ENCODE measurements at regions of chr11 and their contacts with region 1.

Region 1: DNA sequence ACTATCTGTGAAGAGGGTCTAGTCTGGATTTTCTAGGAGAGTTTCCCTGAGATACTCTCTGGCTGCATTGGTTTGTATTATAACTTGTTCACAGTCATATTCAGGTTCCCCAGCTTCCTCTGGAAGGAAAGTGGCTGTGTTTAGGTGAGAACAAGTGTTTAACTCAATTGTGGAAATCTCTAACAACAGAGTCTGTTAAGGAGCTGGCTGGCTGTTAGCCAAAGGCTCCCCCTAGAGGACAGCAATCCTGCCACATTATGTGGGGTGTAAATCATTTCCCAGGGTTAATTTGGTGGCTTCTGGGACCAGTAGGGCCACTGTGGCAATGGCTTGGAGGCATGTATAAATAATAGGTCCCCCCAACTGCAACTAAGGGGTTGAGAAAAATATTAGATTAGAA is 18.4 kb downstream of the MS4A6E start:
- DNase-seq: peak; percentile 8
- ATAC-seq: peak; percentile 74
- H3K4me3 ChIP-seq: no peak overlapping the region
- H3K27ac ChIP-seq: no peak overlapping the region
- H3K4me1 ChIP-seq: no peaks in the 10 kb centered on the region
- H3K27me3 ChIP-seq: peaks cover 0 to 6% of the 10 kb centered on the region in 2 experiments; a peak in 1 of 5 replicates
- CTCF ChIP-seq: peak; percentile 38; the same call in 1 of the 2 replicates
- EP300 ChIP-seq: no peak
- POLR2A ChIP-seq: no peak
- RAD21 ChIP-seq: no peak

Region 2: GRCh38 chr11:60252213-60253108 is 93.0 kb before region 1 on chr11:
- CTCF ChIA-PET with region 1: no interaction called
- POLR2A ChIA-PET with region 1: no interaction called
- in situ Hi-C with region 1: no loop called
- intact Hi-C with region 1: no loop called
- DNase-seq: no peak
- ATAC-seq: no peak
- H3K4me3 ChIP-seq: no peak overlapping the region
- H3K27ac ChIP-seq: no peak overlapping the region
- H3K4me1 ChIP-seq: no peaks in the 10 kb centered on the region
- H3K27me3 ChIP-seq: no peaks in the 10 kb centered on the region; a peak in 1 of 5 replicates
- CTCF ChIP-seq: no peak
- EP300 ChIP-seq: no peak
- POLR2A ChIP-seq: no peak
- RAD21 ChIP-seq: no peak

Region 3: DNA sequence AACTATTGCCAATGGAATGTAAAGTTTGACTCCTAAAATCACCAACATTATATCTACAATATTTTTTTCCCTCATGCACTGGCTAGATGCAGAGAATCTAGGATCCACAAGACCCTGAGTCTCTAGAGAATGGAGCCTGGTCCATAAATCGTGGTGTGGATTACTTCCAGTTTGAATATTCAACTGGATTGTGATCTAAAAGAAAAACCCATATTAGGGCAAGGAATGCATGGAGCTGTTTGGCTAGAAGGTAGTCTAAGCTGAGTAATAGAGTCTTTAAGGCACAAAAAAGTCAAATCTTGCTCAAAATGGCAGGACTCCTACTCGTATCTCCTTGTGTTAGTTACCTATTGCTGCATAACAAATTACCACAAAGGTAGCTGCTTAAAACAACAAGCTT is 74.5 kb after region 1 on chr11:
- CTCF ChIA-PET with region 1: no interaction called
- POLR2A ChIA-PET with region 1: no interaction called
- in situ Hi-C with region 1: loop called (anchors 10 kb)
- intact Hi-C with region 1: no loop called
- DNase-seq: no peak
- ATAC-seq: no peak
- H3K4me3 ChIP-seq: no peak overlapping the region
- H3K27ac ChIP-seq: no peak overlapping the region
- H3K4me1 ChIP-seq: no peaks in the 10 kb centered on the region
- H3K27me3 ChIP-seq: no peaks in the 10 kb centered on the region
- CTCF ChIP-seq: no peak
- EP300 ChIP-seq: no peak
- POLR2A ChIP-seq: no peak
- RAD21 ChIP-seq: no peak

Region 4: DNA sequence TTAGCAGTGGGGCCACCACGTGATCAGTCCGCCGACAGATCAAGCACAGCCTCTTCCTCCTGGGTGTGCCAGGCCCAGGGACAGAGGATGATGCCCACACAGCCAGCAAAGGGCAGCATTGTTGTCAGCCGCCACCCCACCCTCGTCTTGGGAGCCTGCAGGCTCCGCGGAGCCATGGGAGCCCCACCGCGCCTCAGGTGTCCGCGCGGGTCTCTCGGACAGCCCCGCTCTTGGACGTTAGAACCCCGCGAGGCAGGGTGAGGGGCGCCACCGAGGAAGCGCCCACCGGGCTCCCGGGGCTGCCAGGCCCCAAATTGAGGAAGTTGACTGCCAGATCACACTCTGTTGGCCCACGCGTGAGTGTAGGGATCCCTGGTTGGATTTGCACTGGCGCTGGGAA is 270.0 kb after region 1 on chr11:
- CTCF ChIA-PET with region 1: interaction called, 4 read pairs
- POLR2A ChIA-PET with region 1: no interaction called
- in situ Hi-C with region 1: no loop called
- intact Hi-C with region 1: loop called (anchors 5 kb)
- DNase-seq: no peak
- ATAC-seq: no peak
- H3K4me3 ChIP-seq: no peak overlapping the region
- H3K27ac ChIP-seq: no peak overlapping the region
- H3K4me1 ChIP-seq: no peaks in the 10 kb centered on the region
- H3K27me3 ChIP-seq: peaks cover 0 to 2% of the 10 kb centered on the region in 2 experiments; a peak in 2 of 5 replicates
- CTCF ChIP-seq: no peak
- EP300 ChIP-seq: no peak
- POLR2A ChIP-seq: no peak
- RAD21 ChIP-seq: no peak